Heart left ventricle (tissue), 16 donors: ENCODE measurements at regions of chr12 and their contacts with region 1.

Region 1: DNA sequence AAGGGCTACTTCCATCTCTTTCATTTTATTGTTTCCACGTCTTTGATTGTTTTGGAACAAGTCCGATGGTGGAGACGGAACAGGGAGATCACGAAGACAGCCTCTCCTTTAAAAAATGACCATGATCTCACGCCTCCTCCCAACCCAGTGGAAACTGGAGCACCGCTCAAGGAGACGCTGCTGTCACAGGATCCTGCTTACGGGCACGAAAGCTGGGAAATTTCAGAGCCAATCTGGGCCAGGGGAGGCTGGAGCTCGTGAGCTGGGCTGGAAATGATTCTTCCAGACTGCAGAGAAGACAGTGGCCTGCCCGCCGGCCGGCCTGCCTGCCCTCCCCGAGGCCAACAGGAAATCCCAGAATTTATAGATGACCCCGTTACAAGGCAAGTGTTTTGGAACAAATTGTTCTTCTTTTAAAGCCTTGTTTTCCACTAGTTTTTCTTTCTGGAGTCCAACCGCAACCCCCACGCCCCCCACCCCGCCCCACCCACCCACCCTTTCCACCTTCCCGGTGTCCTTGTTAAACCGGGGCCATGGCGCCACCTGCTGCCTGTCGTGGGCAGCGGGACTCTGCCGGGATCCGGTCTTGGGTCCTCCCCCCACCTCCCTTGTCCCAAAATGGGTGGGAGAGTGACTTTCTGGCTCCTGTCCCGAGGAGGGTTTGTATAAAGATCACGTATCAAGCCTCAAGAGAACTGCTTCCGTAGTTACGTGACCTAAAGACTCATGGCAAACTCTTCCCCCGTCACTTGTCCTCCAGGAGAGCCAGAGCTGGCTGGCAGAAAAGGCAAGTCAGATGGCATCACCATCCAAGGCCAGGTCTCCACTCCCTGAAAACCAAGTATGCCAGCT is 40.3 kb downstream of the MAP1LC3B2 start:
- DNase-seq: peak; percentile 81 to 90 (median 83)
- ATAC-seq: peak; percentile 78 to 90 (median 89)
- H3K4me3 ChIP-seq: peak overlapping the region in 10 of 12 donors; percentile 23 to 55 (median 42)
- H3K27ac ChIP-seq: peak overlapping the region; percentile 64 to 89 (median 77)
- H3K4me1 ChIP-seq: peaks cover 0 to 42% (median 17%) of the 10 kb centered on the region in 12 donors
- H3K27me3 ChIP-seq: no peaks in the 10 kb centered on the region
- CTCF ChIP-seq: peak; percentile 47 to 84 (median 74)
- POLR2A ChIP-seq: no peak

Region 2: DNA sequence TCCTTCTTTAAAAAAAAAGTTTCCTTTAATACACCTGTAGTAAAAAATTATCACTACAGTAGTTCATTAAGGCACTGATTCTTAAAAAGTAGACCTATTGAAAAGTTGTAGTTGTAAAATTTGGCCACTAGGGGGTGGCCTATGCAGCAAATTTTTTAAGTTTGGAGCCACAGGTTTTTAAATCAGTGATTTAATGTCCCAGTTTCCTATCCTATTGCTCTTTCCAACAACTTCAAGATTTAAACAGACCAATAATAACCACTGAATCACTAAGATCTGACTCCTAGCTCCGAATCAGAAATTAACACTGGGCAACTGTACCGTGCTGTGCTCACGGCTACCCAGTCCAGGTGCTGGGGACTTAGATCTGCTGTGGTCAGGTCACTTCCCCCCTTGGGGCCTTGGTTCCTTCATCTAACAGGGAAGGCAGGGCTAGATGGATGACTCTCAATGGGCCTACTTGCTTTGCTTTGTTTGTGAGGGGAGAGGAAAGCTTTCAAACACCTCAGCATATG is 601.3 kb before region 1 on chr12:
- intact Hi-C with region 1: loop called in 9 of 10 experiments (anchors 1 to 10 kb)
- DNase-seq: no peak
- ATAC-seq: peak in 2 of 4 donors; percentile 39 to 53
- H3K4me3 ChIP-seq: no peak overlapping the region
- H3K27ac ChIP-seq: peak overlapping the region in 2 of 12 donors; percentile 1 to 11
- H3K4me1 ChIP-seq: peaks cover 0 to 13% (median 3%) of the 10 kb centered on the region in 12 donors
- H3K27me3 ChIP-seq: no peaks in the 10 kb centered on the region
- CTCF ChIP-seq: peak; percentile 76 to 97 (median 86)
- POLR2A ChIP-seq: no peak

Region 3: DNA sequence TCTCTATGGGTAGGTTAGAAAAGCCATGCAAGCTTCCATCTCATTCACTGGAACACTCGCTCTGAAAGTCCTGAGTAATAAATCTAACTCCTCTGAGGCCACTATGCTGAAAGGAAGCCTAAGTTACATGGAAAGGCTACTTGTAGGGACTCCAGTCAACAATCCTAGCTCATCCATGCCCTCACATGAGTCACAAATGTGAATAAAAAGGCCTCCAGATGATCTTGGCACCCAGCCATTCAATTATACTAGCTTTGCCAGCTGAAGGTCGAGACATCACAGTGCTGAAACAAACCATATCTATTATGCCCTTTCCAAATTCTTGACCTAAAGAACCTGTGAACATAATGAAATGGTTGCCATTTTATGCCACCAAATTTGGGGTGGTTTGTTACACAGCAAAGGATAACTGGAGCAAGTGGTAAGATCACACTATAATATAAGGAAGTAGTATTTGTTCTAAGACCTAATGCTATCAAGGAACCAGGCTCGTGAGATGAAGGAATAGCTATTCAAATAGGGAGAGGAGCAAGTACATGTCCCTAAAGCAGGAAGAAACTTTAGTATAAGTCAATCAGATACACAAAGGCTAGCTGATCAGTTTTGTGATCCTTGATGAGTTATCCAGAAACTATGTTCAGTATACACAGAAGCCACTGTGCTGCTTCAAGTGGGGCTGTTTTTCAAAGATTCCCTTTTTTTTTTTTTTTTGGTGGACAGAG is 464.1 kb before region 1 on chr12:
- intact Hi-C with region 1: loop called in 5 of 10 experiments (anchors 5 to 10 kb)
- DNase-seq: no peak
- ATAC-seq: peak in 3 of 4 donors; percentile 49 to 64 (median 57)
- H3K4me3 ChIP-seq: no peak overlapping the region
- H3K27ac ChIP-seq: peak overlapping the region in 1 of 12 donors; percentile 18
- H3K4me1 ChIP-seq: peaks cover 3 to 83% (median 44%) of the 10 kb centered on the region in 12 donors
- H3K27me3 ChIP-seq: no peaks in the 10 kb centered on the region
- CTCF ChIP-seq: no peak
- POLR2A ChIP-seq: no peak

Region 4: GRCh38 chr12:116159175-116159574 is 440.3 kb before region 1 on chr12:
- intact Hi-C with region 1: loop called in 3 of 10 experiments (anchors 5 to 10 kb)
- DNase-seq: no peak
- ATAC-seq: no peak
- H3K4me3 ChIP-seq: no peak overlapping the region
- H3K27ac ChIP-seq: no peak overlapping the region
- H3K4me1 ChIP-seq: peaks cover 15 to 71% (median 48%) of the 10 kb centered on the region in 12 donors
- H3K27me3 ChIP-seq: no peaks in the 10 kb centered on the region
- CTCF ChIP-seq: no peak
- POLR2A ChIP-seq: no peak

Region 5: DNA sequence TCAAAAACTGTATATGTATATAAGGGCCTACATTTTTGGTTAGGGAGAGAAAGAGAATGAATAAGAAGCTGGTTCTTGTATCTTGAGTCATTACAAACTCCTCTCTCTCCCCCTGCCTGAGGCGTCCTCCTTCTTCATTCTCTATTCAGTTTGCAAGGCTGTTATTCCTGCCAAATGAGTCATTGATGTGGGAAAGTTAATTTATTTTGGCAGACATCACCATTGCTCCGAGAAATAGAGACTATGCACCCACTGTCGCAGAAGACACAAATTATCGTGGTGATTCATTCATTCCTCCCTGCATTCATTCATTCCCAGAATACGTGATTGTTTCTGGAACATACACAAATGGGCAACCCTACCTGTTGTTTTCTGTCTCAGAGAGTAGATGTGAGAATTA is 209.5 kb before region 1 on chr12:
- intact Hi-C with region 1: no loop called
- DNase-seq: peak in 1 of 5 donors; percentile 35
- ATAC-seq: peak in 3 of 4 donors; percentile 53 to 85 (median 70)
- H3K4me3 ChIP-seq: no peak overlapping the region
- H3K27ac ChIP-seq: peak overlapping the region in 1 of 12 donors; percentile 43
- H3K4me1 ChIP-seq: peaks cover 0 to 9% (median 0%) of the 10 kb centered on the region in 12 donors
- H3K27me3 ChIP-seq: no peaks in the 10 kb centered on the region
- CTCF ChIP-seq: no peak
- POLR2A ChIP-seq: no peak

Region 6: GRCh38 chr12:116525418-116526001 is 74.0 kb before region 1 on chr12:
- intact Hi-C with region 1: loop called in 1 of 10 experiments (anchors 10 kb)
- DNase-seq: peak in 3 of 5 donors; percentile 46 to 69 (median 54)
- ATAC-seq: peak; percentile 66 to 94 (median 83)
- H3K4me3 ChIP-seq: peak overlapping the region in 1 of 12 donors; percentile 24
- H3K27ac ChIP-seq: peak overlapping the region in 9 of 12 donors; percentile 2 to 79 (median 25)
- H3K4me1 ChIP-seq: peaks cover 0 to 19% (median 0%) of the 10 kb centered on the region in 12 donors
- H3K27me3 ChIP-seq: peaks cover 0 to 38% (median 0%) of the 10 kb centered on the region in 9 donors
- CTCF ChIP-seq: no peak
- POLR2A ChIP-seq: no peak

Region 7: GRCh38 chr12:116697305-116697704 is 97.8 kb after region 1 on chr12:
- intact Hi-C with region 1: loop called in 2 of 10 experiments (anchors 5 to 10 kb)
- DNase-seq: peak in 2 of 5 donors; percentile 37 to 45
- ATAC-seq: peak in 3 of 4 donors; percentile 10 to 53 (median 16)
- H3K4me3 ChIP-seq: no peak overlapping the region
- H3K27ac ChIP-seq: no peak overlapping the region
- H3K4me1 ChIP-seq: peaks cover 0 to 43% (median 24%) of the 10 kb centered on the region in 12 donors
- H3K27me3 ChIP-seq: peaks cover 0 to 28% (median 8%) of the 10 kb centered on the region in 9 donors
- CTCF ChIP-seq: peak in 10 of 12 donors; percentile 6 to 47 (median 26)
- POLR2A ChIP-seq: no peak